ENCODE measurements at regions of chr21 and their contacts with region 1.

Region 1: DNA sequence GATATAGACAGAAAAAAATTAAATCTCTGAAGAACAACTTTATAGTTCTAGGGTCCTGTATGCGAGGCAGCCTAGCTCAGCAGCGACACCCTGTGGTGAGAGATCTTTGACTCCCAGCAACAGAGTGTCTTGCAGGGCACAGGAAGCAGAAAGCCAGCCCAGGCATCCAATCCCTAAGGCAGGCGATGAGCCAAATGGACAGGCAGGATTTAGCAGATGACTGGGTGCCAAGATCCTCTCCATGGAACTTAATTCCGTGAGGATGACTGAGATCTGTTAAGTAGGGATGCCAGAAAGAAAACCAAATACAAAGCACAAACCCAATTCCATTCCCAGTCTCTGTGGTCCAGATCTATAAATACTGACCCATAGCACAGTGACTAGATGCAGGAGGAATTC is 38.8 kb downstream of the HLCS start:
- DNase-seq: peak; percentile 74 to 83 (median 77)
- ATAC-seq: peak; percentile 60 to 88 (median 82)
- H3K4me3 ChIP-seq: no peak overlapping the region
- H3K27ac ChIP-seq: no peak overlapping the region
- H3K4me1 ChIP-seq: peaks cover 0 to 13% (median 1%) of the 10 kb centered on the region in 12 donors
- H3K27me3 ChIP-seq: no peaks in the 10 kb centered on the region
- CTCF ChIP-seq: peak; percentile 88 to 99 (median 92)
- POLR2A ChIP-seq: no peak

Region 2: GRCh38 chr21:36429947-36430546 is 497.7 kb before region 1 on chr21:
- intact Hi-C with region 1: loop called in 1 of 10 experiments (anchors 10 kb)
- DNase-seq: peak; percentile 66 to 93 (median 80)
- ATAC-seq: peak; percentile 88 to 95 (median 94)
- H3K4me3 ChIP-seq: peak overlapping the region in 11 of 12 donors; percentile 9 to 53 (median 35)
- H3K27ac ChIP-seq: peak overlapping the region; percentile 20 to 88 (median 74)
- H3K4me1 ChIP-seq: peaks cover 0 to 34% (median 5%) of the 10 kb centered on the region in 12 donors
- H3K27me3 ChIP-seq: peaks cover 0 to 6% (median 0%) of the 10 kb centered on the region in 9 donors
- CTCF ChIP-seq: peak in 3 of 12 donors; percentile 3 to 10 (median 8)
- POLR2A ChIP-seq: peak in 1 of 2 donors; percentile 71

Region 3: GRCh38 chr21:36630485-36631206 is 297.1 kb before region 1 on chr21:
- intact Hi-C with region 1: loop called (anchors 1 to 5 kb)
- DNase-seq: peak in 4 of 5 donors; percentile 36 to 75 (median 46)
- ATAC-seq: peak in 3 of 4 donors; percentile 37 to 53 (median 41)
- H3K4me3 ChIP-seq: no peak overlapping the region
- H3K27ac ChIP-seq: no peak overlapping the region
- H3K4me1 ChIP-seq: no peaks in the 10 kb centered on the region
- H3K27me3 ChIP-seq: peaks cover 0 to 45% (median 0%) of the 10 kb centered on the region in 9 donors
- CTCF ChIP-seq: peak; percentile 49 to 79 (median 72)
- POLR2A ChIP-seq: no peak

Region 4: DNA sequence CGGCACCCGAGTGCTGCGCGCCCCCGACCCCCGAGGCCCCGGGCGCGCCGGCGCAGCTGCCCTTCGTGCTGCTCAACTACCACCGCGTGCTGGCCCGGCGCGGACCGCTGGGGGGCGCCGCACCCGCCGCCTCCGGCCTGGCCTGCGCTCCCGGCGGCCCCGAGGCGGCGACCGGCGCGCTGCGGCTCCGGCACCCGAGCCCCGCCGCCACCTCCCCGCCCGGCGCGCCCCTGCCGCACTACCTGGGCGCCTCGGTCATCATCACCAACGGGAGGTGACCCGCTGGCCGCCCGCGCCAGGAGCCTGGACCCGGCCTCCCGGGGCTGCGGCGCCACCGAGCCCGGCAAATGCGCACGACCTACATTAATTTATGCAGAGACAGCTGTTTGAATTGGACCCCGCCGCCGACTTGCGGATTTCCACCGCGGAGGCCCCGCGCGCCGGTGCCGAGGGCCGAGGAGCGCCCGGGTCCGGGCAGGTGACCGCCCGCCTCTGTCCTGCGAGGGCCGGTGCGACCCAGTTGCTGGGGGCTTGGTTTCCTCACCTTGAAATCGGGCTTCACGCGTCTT is 179.8 kb before region 1 on chr21:
- intact Hi-C with region 1: loop called in 5 of 10 experiments (anchors 5 to 10 kb)
- DNase-seq: peak; percentile 39 to 71 (median 62)
- ATAC-seq: peak in 3 of 4 donors; percentile 49 to 77 (median 68)
- H3K4me3 ChIP-seq: peak overlapping the region; percentile 22 to 62 (median 56)
- H3K27ac ChIP-seq: peak overlapping the region in 1 of 12 donors; percentile 33
- H3K4me1 ChIP-seq: peaks cover 0 to 19% (median 5%) of the 10 kb centered on the region in 12 donors
- H3K27me3 ChIP-seq: peaks cover 0 to 29% (median 0%) of the 10 kb centered on the region in 9 donors
- CTCF ChIP-seq: peak in 4 of 12 donors; percentile 9 to 35 (median 26)
- POLR2A ChIP-seq: no peak

Measured in heart left ventricle (tissue), 16 donors.